ENCODE measurements at regions of chr3 and their contacts with region 1.

Region 1: GRCh38 chr3:126679318-126679751 is 24.4 kb upstream of the TXNRD3 start:
- DNase-seq: no peak
- H3K4me3 ChIP-seq: no peak overlapping the region
- H3K27me3 ChIP-seq: peaks cover 6% of the 10 kb centered on the region
- CTCF ChIP-seq: peak; percentile 97

Region 2: DNA sequence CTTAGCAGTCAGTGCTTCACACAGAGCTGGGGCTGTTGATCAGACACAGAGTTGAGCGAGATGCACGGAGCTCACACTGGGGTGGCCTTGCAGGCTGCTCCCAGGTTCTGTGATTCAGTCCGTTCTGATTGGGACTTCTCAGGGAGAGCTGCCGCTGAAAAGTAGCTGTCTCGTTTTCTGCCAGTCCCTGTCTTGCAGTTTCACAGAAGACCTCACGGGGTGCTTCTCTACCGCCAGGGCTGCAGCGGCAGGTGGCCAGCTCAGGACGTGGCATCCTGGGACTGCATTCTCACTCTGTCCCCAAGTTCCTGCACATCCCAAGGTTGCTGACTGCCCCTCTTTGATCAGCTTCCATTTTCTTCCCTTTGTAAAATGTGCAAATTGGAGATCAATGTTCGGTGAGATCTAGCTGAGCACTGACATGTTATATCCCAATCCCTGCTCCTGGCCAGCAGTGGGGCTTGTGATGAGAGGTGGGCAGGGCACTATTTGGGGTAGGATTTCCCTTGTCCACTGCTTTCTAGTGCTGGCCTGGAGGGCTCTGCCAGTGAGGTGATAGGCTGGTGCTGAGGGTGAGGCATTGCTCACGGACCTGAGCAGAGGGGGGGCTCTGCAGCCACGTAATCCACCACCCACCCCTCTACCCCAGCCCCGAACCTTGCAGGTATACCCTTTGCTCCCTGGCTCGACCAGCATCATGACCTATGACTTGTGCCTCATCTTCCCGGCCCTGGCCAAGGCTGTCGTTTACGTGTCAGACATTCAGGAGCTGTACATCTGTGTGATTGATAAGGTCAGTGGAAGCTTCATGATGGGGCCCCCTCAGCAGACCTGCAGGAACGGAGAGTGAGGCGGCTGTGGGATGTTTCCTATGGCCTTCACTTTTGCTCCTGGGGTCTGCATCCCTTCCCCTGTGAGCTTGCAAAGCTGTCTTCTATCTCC is 19.1 kb before region 1 on chr3:
- CTCF ChIA-PET with region 1: interaction called, 36 read pairs
- POLR2A ChIA-PET with region 1: no interaction called
- DNase-seq: no peak
- H3K4me3 ChIP-seq: no peak overlapping the region
- H3K27me3 ChIP-seq: peaks cover 36% of the 10 kb centered on the region
- CTCF ChIP-seq: peak; percentile 41

Region 3: GRCh38 chr3:126692845-126693244 is 13.5 kb after region 1 on chr3:
- CTCF ChIA-PET with region 1: interaction called, 14 read pairs
- POLR2A ChIA-PET with region 1: no interaction called
- DNase-seq: no peak
- H3K4me3 ChIP-seq: no peak overlapping the region
- H3K27me3 ChIP-seq: peaks cover 8% of the 10 kb centered on the region; the same call in 1 of the 2 replicates
- CTCF ChIP-seq: no peak

Region 4: GRCh38 chr3:126752303-126752842 is 73.0 kb after region 1 on chr3:
- CTCF ChIA-PET with region 1: interaction called, 11 read pairs
- POLR2A ChIA-PET with region 1: no interaction called
- DNase-seq: no peak
- H3K4me3 ChIP-seq: no peak overlapping the region
- H3K27me3 ChIP-seq: no peaks in the 10 kb centered on the region
- CTCF ChIP-seq: peak; percentile 94

Region 5: DNA sequence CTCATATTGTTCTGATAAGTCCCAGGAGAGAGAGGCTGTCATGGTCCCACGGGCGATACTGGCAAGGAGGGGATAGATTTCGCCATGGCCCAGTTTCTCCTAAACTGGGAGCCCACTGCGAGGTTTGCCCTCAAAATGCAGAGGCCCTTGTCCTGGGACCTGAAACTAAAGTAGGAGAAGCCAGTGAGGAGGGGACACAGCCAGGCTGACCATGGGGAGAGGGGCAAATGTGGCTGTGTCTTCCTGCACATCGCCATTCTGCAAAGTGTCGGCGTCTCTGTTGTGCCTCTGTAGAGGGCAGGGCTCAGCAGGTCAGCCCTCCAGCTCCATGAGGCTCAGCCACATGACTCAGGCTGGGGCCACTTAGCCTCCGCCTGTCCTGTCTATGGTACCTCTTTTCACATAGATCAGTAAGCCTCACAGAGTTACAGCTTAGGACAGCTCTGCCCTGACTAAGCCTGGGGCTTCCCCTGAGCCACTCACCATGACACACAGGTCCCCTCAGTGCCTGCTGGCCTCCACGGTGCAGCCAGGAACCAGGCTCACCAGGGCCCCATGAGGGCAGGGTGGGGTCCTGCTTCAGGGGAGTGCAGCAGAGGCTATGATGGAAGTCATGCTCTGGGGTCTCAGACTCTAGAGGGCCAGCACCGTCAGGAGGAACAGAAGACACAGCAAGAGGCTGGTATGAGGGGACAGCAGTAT is 275.0 kb after region 1 on chr3:
- CTCF ChIA-PET with region 1: no interaction called
- POLR2A ChIA-PET with region 1: no interaction called
- DNase-seq: no peak
- H3K4me3 ChIP-seq: no peak overlapping the region
- H3K27me3 ChIP-seq: no peaks in the 10 kb centered on the region
- CTCF ChIP-seq: no peak

Region 6: GRCh38 chr3:127544192-127544802 is 865.0 kb after region 1 on chr3:
- CTCF ChIA-PET with region 1: interaction called, 61 read pairs
- POLR2A ChIA-PET with region 1: no interaction called
- DNase-seq: no peak
- H3K4me3 ChIP-seq: no peak overlapping the region
- H3K27me3 ChIP-seq: peaks cover 1% of the 10 kb centered on the region; the same call in 1 of the 2 replicates
- CTCF ChIP-seq: peak; percentile 87

Measured in BJ (cell line).